CD4-positive, alpha-beta T cell (primary cell): ENCODE measurements at regions of chr13 and their contacts with region 1.

Region 1: DNA sequence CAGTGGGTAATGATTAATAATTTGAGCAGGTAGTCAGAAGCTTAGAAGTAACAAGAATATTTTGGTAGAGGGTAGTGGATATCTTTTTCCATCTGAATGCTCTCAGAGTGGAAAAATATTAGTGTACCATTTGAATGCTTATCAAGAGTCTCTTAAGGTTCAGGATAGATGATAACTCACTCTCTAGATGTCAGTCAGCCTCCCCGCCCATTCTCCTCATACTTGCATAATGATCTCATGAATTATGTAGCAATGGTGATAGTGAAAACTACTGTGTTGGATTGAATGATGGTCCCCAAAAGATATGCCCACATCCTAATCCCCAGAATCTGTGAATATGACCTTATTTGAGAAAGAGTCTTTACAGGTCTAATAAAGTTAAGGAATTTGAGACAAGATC is 132.7 kb upstream of the KLF12 start:
- DNase-seq: no peak
- ATAC-seq: no peak
- H3K4me3 ChIP-seq: no peak overlapping the region
- H3K4me3 Mint-ChIP-seq: no peak overlapping the region
- H3K27ac ChIP-seq: no peak overlapping the region
- H3K27ac Mint-ChIP-seq: no peak overlapping the region
- H3K4me1 ChIP-seq: peaks cover under 1% of the 10 kb centered on the region
- H3K4me1 Mint-ChIP-seq: no peaks in the 10 kb centered on the region
- H3K27me3 ChIP-seq: no peaks in the 10 kb centered on the region
- H3K27me3 Mint-ChIP-seq: no peaks in the 10 kb centered on the region
- CTCF ChIP-seq: no peak

Region 2: DNA sequence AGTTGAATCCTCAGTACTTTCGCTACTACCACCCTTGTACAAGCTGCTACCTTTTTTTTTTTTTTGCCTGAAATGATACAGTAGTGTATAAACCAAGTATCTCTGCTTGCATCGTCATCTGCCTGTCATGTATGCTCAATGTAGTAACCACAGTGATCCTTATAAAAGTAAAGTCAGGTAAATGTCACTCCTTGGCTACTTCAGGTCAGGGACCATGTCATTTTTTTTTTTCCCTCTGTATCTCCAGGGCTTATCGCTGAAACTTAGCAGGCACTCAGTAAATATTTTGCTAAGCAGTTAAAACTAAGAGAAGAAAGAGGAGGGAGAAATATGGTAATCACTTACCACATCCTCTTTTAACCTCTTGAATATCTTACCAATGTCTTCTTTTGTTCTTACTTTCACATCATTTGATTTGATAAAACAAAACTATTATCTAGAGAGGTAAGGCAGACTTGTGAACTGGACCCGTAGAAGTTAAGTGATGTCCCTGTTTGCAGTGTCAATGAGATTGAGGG is 35.8 kb before region 1 on chr13:
- CTCF ChIA-PET with region 1: no interaction called
- POLR2A ChIA-PET with region 1: no interaction called
- intact Hi-C with region 1: loop called in 1 of 2 experiments (anchors 5 kb)
- DNase-seq: peak in 4 of 14 experiments; percentile 14 to 79 (median 52)
- ATAC-seq: peak; percentile 88
- H3K4me3 ChIP-seq: peak overlapping the region; percentile 56
- H3K4me3 Mint-ChIP-seq: peak overlapping the region; percentile 79
- H3K27ac ChIP-seq: peak overlapping the region; percentile 15 to 38
- H3K27ac Mint-ChIP-seq: peak overlapping the region; percentile 90
- H3K4me1 ChIP-seq: peaks cover 17% of the 10 kb centered on the region
- H3K4me1 Mint-ChIP-seq: peaks cover 51% of the 10 kb centered on the region
- H3K27me3 ChIP-seq: no peaks in the 10 kb centered on the region
- H3K27me3 Mint-ChIP-seq: no peaks in the 10 kb centered on the region
- CTCF ChIP-seq: no peak